ENCODE measurements at regions of chrX and their contacts with region 1.

Region 1: DNA sequence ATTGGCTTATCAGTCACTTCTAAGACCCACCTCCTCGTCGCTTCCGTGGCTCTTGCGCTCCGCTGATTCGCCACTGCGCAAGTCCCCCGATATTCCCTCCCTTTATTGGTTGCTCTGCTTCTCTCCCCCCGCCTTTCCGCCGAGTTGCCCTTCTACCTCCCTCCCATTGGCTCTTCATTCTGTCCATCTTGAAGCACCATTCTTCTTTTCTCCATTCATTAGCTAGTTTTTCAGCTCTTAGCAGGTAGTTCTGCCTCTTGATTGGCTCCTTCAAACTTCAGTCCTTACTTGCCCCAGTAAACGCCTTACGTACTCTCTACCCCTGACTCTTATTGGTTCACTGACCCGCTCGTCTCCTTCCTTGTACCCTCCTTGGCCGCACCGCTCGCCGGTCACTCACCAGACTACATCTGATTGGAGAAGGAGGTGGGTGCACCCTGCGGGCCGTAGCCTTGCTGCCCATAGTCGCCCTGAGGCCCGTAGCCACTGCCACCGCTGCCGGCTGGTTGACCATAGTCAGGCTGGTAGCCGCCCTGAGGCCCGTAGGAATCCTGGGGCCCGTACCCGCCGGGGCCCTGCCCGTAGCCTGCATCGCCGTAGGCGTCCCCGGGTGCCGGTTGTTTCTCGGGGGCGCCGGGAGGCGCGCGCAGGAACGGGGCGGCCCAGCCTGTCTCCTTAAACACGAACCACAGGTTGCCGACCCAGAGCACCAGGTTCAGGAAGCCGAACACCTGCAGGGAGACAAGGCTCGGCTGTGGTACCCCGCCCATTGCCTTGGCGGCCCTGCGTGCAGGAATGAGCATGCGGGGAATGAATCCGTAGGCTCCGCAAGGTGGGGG is 5.1 kb upstream of the PRICKLE3 start:
- DNase-seq: peak; percentile 89
- H3K4me3 Mint-ChIP-seq: peak overlapping the region; percentile 94
- H3K27ac Mint-ChIP-seq: peak overlapping the region; percentile 87
- H3K4me1 Mint-ChIP-seq: peaks cover 45% of the 10 kb centered on the region
- H3K27me3 Mint-ChIP-seq: no peaks in the 10 kb centered on the region

Region 2: DNA sequence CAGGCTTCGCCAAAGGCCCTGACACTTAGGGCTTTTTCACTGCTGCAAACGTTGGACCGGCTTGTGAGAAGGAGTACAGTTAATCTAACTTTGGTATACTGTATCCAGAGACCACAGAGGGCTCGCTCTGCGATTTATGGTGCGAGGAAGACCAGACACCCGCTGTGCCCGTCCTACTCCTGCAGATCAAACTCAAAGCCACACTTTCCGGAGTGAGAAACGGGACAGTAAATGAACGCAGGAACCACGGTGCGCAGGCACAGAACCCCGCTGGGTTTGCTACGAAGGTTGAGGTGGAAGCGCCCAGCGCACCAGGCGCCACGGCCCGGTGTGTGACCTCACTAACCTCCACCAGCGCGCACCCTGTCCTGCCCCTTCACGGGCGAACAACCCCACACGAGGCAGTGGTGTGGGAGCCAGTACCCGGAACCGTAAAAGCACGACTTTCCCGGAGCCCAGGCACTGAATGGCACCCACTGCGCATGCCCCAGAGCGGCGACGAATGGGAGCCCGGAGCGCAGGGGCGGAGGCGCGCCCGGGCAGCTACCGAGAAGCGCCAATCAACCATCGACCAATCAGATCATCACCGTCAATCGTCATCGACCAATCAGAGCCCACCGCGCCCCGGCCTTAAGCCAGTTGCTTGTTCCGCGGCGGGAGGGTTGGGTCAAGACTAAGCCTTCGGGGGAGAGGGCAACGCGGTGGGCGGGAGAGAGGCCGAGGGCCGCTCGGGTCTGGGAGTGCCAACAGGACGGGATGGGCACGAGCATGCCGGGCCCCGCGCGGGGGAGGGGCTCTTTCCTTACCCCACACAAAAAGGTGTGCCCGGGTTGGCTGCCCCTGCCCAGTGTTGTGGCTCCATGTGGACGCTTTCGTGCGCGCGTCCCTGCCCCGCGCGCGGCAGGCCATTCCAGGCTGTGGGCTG is 90.3 kb before region 1 on chrX:
- CTCF ChIA-PET with region 1: no interaction called
- POLR2A ChIA-PET with region 1: no interaction called
- DNase-seq: peak; percentile 91
- H3K4me3 Mint-ChIP-seq: peak overlapping the region; percentile 87
- H3K27ac Mint-ChIP-seq: peak overlapping the region; percentile 92
- H3K4me1 Mint-ChIP-seq: peaks cover 11% of the 10 kb centered on the region
- H3K27me3 Mint-ChIP-seq: no peaks in the 10 kb centered on the region

Region 3: DNA sequence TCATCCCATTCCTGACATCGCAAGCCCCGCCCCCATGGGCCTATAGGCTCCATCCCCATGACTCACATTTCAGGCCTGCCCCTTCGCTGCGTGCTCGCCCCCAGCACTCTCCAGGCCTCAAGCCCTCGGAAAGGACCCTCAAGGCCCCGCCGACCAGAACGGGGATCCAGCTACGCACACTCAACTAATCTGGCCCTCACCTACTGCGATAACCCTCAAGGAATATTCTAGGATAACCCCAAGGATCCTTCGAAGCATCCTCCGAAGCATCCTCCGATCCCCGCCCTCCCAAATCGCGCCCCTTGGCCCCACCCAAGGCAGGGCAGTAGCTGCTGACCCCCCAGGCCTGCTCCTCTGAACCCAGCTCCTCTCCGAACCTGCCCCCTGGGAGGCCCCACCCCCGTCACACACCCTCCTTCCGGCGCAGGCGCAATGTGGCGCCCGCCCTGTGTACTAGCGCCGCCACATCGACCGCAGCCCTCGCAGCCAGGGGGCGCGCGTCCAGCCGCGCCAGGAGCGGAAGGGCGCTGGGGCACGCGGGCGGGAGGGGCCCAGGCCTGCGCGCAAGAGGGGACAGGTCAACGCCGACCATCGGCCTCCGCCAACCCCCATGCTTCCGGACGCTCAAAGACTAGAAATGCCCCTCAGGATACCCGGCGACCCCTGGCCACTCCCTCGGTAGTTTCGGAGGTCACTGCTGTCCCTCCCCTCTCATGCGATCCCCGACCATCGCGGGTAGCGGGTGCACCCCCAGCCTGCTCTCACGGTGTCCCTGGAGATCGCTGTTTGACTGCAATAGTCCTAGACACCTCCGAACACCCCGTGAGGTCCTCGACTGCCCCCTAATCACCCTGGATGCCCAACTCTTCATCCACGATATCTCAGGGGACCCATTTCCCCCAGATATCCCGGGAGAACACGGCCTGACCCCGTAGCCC is 35.1 kb before region 1 on chrX:
- CTCF ChIA-PET with region 1: interaction called, 14 read pairs
- POLR2A ChIA-PET with region 1: no interaction called
- DNase-seq: peak; percentile 87
- H3K4me3 Mint-ChIP-seq: peak overlapping the region; percentile 89
- H3K27ac Mint-ChIP-seq: peak overlapping the region; percentile 94
- H3K4me1 Mint-ChIP-seq: peaks cover 18% of the 10 kb centered on the region
- H3K27me3 Mint-ChIP-seq: no peaks in the 10 kb centered on the region

Region 4: GRCh38 chrX:49165901-49166881 is 25.1 kb before region 1 on chrX:
- CTCF ChIA-PET with region 1: interaction called, 20 read pairs
- POLR2A ChIA-PET with region 1: interaction called, 30 read pairs
- DNase-seq: peak; percentile 82
- H3K4me3 Mint-ChIP-seq: peak overlapping the region; percentile 80
- H3K27ac Mint-ChIP-seq: peak overlapping the region; percentile 99
- H3K4me1 Mint-ChIP-seq: peaks cover 45% of the 10 kb centered on the region
- H3K27me3 Mint-ChIP-seq: no peaks in the 10 kb centered on the region

Region 5: DNA sequence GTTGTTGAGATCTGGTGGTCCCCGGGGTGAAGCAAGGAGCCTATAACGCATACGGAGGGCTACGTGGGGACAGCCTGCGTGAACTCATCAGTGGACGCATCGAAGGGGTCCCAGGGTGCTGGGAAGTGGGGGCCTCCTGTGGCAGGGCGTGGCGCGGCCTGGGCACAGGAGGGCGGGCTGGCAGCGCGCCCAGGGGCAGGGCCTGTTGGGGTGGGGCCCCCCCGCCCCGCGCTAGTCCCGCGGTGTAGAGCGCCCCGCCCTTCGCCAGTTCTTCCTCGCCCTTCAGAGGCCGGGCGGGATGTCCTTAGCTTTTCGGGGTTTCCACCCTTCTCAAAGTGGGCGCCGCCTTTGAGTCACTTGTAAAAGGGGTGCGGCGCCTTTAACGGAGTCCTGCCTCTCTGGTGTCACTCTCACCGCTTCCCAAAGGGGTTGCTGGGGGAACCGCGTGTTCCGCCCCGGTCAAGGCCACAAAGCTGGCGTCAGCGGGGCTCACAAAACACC is 18.9 kb before region 1 on chrX:
- CTCF ChIA-PET with region 1: interaction called, 20 read pairs
- POLR2A ChIA-PET with region 1: interaction called, 30 read pairs
- DNase-seq: peak; percentile 85
- H3K4me3 Mint-ChIP-seq: peak overlapping the region; percentile 84
- H3K27ac Mint-ChIP-seq: peak overlapping the region; percentile 89
- H3K4me1 Mint-ChIP-seq: peaks cover 52% of the 10 kb centered on the region
- H3K27me3 Mint-ChIP-seq: no peaks in the 10 kb centered on the region

Region 6: DNA sequence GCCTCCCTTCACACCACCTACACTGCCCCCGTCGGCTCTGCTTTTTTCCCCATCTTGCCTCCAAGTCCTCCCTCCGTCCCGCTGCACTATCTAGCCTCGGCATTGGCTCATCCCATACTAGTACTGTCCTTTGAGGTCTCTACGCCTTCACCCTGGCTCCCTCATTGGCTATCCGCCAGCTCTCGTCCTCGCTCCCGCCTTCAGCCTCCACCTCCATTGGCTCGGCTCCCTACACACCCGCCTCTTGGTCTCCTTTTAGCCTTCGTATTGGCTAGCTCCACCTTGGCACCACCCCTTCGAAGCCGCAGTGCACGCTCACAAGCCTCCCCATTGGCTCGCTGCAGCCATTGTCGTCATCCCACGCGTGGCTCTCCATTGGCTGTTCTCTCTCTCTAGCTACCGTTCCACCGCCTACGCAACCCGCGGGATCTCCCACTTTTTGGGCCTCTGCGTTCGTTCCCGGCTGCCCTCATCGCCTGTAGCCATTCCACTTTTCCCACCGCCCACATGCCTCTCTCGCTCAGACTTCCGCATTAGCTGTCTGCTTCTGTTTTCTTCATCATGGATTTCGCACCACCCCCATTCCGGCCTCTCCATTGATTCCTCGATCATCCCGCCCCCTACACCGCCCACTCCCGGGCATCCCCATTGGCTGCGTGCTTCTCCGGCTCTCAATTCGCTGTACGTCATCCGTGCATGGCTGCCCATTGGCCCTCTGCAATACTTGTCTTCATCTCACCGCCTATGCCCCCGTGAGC is 77.9 kb after region 1 on chrX:
- CTCF ChIA-PET with region 1: interaction called, 15 read pairs
- POLR2A ChIA-PET with region 1: interaction called, 7 read pairs
- DNase-seq: peak; percentile 94
- H3K4me3 Mint-ChIP-seq: peak overlapping the region; percentile 81
- H3K27ac Mint-ChIP-seq: peak overlapping the region; percentile 91
- H3K4me1 Mint-ChIP-seq: peaks cover 61% of the 10 kb centered on the region
- H3K27me3 Mint-ChIP-seq: no peaks in the 10 kb centered on the region